ENCODE measurements at regions of chr16 and their contacts with region 1.

Region 1: DNA sequence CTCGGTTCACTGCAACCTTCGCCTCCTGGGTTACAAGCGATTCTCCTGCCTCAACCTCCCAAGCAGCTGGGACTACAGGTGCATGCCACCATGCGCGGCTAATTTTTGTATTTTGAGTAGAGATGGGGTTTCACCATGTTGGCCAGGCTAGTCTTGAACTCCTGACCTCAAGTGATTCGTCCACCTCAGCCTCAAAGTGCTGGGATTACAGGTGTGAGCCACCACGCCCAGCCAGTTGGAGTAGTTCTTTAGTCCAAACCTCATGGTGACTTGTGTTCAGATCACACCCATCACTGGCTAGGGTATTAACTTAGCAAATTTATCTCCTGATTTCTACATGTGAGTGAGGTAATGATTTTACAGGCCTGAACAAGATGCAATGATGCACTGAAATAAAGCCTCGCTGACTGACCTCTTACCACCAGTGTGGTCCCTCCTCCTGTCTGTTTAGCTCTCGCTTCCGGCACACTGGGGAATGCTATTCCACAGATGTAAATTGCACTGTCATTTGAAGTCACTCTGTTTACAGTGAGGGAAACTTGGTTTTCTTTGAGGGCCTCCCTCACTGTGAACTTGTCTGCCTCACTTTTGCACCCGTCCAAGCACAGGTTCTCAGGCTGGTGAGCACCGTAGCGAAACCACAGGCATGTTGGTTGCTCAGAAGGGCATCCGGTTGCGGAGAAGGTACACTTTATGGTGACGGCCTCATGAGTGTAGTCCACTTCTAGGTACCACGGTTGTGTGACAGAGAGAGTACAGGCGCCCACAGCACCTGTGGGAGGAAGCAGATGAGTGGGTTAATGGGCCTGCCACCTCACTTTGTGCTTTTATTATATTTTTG is 5.5 kb downstream of the IGSF6 start:
- DNase-seq: peak; percentile 60 to 86
- ATAC-seq: peak; percentile 71 to 78 (median 78)
- H3K4me3 ChIP-seq: no peak overlapping the region
- H3K4me3 Mint-ChIP-seq: peak overlapping the region; percentile 72
- H3K27ac ChIP-seq: peak overlapping the region; percentile 84
- H3K27ac Mint-ChIP-seq: peak overlapping the region; percentile 88 to 95
- H3K4me1 ChIP-seq: peaks cover 43% of the 10 kb centered on the region
- H3K4me1 Mint-ChIP-seq: peaks cover 41 to 50% of the 10 kb centered on the region in 2 donors
- H3K27me3 ChIP-seq: no peaks in the 10 kb centered on the region
- H3K27me3 Mint-ChIP-seq: no peaks in the 10 kb centered on the region
- CTCF ChIP-seq: no peak

Region 2: DNA sequence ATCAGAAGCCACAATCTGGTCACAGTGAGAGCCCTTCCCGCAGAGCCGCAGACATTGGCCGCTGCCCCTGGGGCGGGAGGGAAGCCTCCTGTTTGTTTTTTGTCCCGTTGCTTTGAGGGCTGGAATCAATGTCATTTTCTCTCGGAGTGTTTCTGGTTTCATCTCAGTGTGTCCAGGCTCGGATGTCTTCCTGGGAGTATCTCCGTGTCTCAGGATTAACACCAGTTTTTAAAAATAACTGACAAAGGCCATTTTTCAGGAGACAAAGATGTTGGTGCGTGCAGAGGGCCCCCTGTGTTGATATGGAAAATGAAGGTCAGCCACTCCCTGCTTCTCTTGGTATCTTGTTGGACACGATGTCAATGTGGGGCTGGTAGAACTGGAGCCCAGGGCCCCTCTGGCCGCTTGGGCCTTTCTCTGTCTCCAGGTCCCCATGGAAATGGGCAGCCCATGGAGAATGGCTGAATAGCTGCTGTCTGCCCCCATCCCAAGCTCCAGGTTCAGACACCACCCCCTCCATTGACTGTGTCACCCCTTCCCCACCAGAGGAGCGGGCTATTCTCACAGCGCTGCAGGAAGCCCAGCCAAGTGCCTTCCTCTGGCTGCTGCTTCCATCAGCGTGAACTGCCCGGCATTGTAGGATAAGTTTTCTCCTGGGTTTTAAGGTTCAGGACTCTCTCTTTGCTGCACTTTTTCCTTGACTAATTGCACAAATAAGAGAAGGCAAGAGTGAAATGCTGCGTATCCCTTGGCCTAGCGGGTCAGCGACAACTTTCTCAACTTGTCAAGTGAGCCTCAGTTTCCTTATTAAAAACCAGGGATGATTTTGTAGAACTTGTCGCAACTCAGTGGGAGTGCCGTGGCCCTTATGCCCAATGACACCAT is 119.8 kb before region 1 on chr16:
- intact Hi-C with region 1: loop called (anchors 10 kb)
- DNase-seq: no peak
- ATAC-seq: no peak
- H3K4me3 ChIP-seq: no peak overlapping the region
- H3K4me3 Mint-ChIP-seq: no peak overlapping the region
- H3K27ac ChIP-seq: no peak overlapping the region
- H3K27ac Mint-ChIP-seq: no peak overlapping the region
- H3K4me1 ChIP-seq: no peaks in the 10 kb centered on the region
- H3K4me1 Mint-ChIP-seq: no peaks in the 10 kb centered on the region
- H3K27me3 ChIP-seq: no peaks in the 10 kb centered on the region
- H3K27me3 Mint-ChIP-seq: peaks cover 6 to 15% of the 10 kb centered on the region in 2 donors
- CTCF ChIP-seq: no peak

Region 3: DNA sequence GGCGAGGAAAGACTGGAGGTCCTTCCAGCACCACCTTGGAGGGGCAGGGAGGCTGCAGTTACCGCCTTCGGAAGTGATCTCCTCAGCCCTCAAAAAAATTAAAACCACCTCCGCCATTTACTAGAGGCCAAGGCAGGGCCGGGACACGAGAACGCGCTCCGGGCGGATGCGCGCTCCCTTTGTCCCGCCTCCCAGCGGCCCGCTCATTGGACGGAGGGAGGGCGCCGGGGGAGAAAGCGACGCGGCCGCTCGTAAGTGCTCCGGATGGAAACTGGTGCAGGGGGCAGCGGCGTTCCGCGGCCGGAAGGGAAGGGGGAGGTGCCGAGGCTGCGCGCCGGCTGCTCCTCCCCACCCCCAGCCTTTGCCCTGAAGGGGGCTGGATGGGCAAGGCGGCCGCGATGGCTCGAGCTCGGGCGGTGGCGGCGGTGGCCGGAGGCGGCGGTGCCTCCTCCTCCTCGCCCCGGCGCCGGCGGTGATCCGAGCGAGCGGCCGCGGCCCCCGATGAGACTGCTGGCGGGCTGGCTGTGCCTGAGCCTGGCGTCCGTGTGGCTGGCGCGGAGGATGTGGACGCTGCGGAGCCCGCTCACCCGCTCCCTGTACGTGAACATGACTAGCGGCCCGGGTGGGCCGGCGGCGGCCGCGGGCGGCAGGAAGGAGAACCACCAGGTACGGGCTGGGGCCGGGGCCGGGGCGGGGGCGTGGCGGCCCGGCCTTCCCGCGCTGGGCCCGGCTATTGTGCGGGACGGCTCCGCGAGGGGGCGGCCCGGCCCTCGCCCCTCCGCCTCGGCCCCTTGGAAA is 47.5 kb before region 1 on chr16 and contains the start of gene METTL9:
- intact Hi-C with region 1: loop called (anchors 2 kb)
- DNase-seq: peak; percentile 93 to 97
- ATAC-seq: peak; percentile 93 to 99 (median 95)
- H3K4me3 ChIP-seq: peak within 1 kb of the TSS; percentile 71
- H3K4me3 Mint-ChIP-seq: peak within 1 kb of the TSS; percentile 95
- H3K27ac ChIP-seq: peak within 1 kb of the TSS; percentile 93
- H3K27ac Mint-ChIP-seq: peak within 1 kb of the TSS; percentile 90 to 92
- H3K4me1 ChIP-seq: peaks cover 5% of the 10 kb centered on the region
- H3K4me1 Mint-ChIP-seq: peaks cover 35 to 49% of the 10 kb centered on the region in 2 donors
- H3K27me3 ChIP-seq: no peaks in the 10 kb centered on the region
- H3K27me3 Mint-ChIP-seq: no peaks in the 10 kb centered on the region
- CTCF ChIP-seq: no peak
- total RNA-seq, gene METTL9: 73.1 to 110 (median 85.1) TPM

Region 4: DNA sequence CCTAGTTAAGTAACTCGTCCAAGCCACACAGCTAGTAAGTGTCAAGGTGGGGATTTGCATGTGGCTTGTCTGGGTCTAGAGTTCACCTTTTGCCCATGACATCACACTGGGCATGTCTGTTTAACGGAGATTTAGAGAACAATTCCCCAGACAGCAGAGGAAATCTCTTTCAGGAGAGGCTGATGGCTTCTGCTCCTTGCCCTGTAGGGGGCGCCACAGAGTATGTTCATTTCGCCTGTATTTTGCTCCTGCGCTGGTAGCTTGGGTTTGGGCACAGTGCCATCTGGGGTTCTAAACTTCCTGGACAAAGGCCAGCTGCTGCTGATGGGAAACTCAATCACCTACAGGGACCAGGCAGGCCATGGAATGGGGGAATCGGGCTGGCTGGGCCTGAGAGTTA is 37.3 kb after region 1 on chr16:
- intact Hi-C with region 1: no loop called
- DNase-seq: peak; percentile 20 to 62
- ATAC-seq: no peak
- H3K4me3 ChIP-seq: no peak overlapping the region
- H3K4me3 Mint-ChIP-seq: no peak overlapping the region
- H3K27ac ChIP-seq: no peak overlapping the region
- H3K27ac Mint-ChIP-seq: no peak overlapping the region
- H3K4me1 ChIP-seq: no peaks in the 10 kb centered on the region
- H3K4me1 Mint-ChIP-seq: peaks cover 0 to 4% of the 10 kb centered on the region in 2 donors
- H3K27me3 ChIP-seq: peaks cover 3% of the 10 kb centered on the region
- H3K27me3 Mint-ChIP-seq: peaks cover 7 to 11% of the 10 kb centered on the region in 2 donors
- CTCF ChIP-seq: peak; percentile 64

Region 5: DNA sequence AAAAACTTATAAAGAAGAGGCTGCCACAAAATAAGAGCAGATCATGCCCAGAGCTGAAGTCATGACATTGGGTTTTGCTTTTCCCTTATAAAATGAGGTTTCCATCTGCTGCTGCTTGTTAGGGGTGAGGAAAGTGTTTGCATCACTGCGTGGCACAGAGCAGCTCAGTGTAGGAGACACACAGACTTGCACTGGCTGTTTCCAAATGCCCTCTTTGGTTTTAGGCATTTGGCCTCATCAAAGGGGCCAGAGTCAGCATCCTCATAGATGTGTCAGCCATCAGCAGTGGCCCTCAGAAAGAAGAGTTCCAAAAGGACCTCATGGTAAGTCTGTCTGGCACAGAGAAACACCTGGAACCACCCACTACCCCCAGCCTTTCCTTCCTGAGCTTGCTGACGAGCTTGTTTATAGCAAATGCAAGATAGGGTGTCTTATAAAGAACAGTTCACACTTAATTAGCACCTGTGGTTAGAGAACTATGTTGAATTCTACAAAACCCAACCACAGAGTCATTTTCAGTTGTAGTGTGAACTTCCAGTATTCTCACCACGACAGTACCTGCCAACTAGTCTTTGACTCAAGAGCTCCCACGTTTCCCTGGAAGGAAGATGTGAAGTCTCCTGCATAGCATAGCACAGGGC is 462.4 kb after region 1 on chr16:
- intact Hi-C with region 1: no loop called
- DNase-seq: peak in 1 of 2 donors; percentile 18
- ATAC-seq: peak in 1 of 3 donors; percentile 80
- H3K4me3 ChIP-seq: no peak overlapping the region
- H3K4me3 Mint-ChIP-seq: no peak overlapping the region
- H3K27ac ChIP-seq: no peak overlapping the region
- H3K27ac Mint-ChIP-seq: no peak overlapping the region
- H3K4me1 ChIP-seq: peaks cover 4% of the 10 kb centered on the region
- H3K4me1 Mint-ChIP-seq: peaks cover 17 to 21% of the 10 kb centered on the region in 2 donors
- H3K27me3 ChIP-seq: no peaks in the 10 kb centered on the region
- H3K27me3 Mint-ChIP-seq: peaks cover 0 to 7% of the 10 kb centered on the region in 2 donors
- CTCF ChIP-seq: no peak

Region 6: DNA sequence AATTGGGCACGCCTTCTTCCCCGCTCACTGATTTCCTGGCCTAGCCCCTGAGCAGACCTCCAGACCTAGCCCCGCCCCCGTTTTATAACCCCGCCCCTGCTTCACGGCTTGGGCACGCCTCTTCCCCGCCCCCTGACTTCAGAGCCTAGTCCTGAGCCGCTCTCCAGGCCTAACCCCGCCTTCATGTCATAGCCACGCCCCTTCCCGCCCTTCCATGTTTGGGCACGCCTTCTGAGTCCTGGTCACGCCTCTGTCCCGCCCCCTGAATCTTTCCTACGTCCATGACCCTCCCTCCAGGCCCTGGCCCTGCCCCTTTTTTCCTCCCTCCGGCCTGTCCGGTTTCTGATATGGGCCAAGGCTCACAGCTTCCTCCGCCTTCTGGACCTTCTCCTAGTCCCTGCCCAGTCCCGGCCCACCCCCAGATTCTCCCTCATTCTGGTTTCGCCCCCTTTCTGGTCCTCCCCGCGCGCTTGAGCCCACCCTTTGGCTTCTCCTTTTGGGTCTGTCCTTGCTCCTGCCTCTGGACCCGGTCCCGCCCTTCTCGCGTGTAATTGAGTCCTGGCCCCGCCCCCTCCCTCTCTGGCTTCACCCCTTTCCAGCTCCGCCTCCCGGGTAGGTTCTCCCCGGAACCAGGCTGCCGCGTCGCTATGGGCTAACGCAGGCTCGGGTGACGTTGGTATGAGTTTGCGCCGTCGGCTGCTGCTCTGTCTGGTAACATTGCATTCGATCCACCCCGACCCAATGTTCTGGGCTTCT is 544.0 kb after region 1 on chr16:
- intact Hi-C with region 1: loop called (anchors 5 kb)
- DNase-seq: peak; percentile 99 to 100
- ATAC-seq: peak; percentile 65 to 88 (median 69)
- H3K4me3 ChIP-seq: peak overlapping the region; percentile 43
- H3K4me3 Mint-ChIP-seq: peak overlapping the region; percentile 94
- H3K27ac ChIP-seq: peak overlapping the region; percentile 99
- H3K27ac Mint-ChIP-seq: peak overlapping the region; percentile 91 to 98
- H3K4me1 ChIP-seq: peaks cover 63% of the 10 kb centered on the region
- H3K4me1 Mint-ChIP-seq: peaks cover 64 to 75% of the 10 kb centered on the region in 2 donors
- H3K27me3 ChIP-seq: no peaks in the 10 kb centered on the region
- H3K27me3 Mint-ChIP-seq: no peaks in the 10 kb centered on the region
- CTCF ChIP-seq: no peak

Region 7: DNA sequence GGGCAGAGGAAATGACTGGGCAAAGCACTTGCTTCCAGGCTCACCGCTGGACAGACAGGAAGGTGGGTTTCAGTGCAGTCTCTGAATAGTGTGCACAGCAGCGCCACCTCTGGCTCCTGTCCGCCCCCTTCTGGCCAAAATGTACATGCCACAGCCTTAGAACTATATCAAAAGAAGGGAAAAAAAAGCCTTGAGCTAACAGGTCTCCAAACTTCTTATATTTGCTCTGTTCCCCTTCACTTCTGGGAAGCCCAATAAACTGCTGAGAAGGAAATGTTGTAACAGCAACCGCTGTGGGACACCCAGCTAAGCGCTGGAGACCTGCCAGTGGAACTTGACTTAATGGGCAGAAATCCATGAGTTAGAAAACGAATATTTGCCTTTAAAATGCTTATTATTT is 1788.6 kb after region 1 on chr16:
- intact Hi-C with region 1: loop called (anchors 10 kb)
- DNase-seq: peak; percentile 50 to 79
- ATAC-seq: peak; percentile 84 to 93 (median 93)
- H3K4me3 ChIP-seq: no peak overlapping the region
- H3K4me3 Mint-ChIP-seq: no peak overlapping the region
- H3K27ac ChIP-seq: no peak overlapping the region
- H3K27ac Mint-ChIP-seq: no peak overlapping the region
- H3K4me1 ChIP-seq: no peaks in the 10 kb centered on the region
- H3K4me1 Mint-ChIP-seq: no peaks in the 10 kb centered on the region
- H3K27me3 ChIP-seq: no peaks in the 10 kb centered on the region
- H3K27me3 Mint-ChIP-seq: no peaks in the 10 kb centered on the region
- CTCF ChIP-seq: peak; percentile 84

Measured in natural killer cell (primary cell).